ENCODE measurements at regions of chr5 and their contacts with region 1.

Region 1: DNA sequence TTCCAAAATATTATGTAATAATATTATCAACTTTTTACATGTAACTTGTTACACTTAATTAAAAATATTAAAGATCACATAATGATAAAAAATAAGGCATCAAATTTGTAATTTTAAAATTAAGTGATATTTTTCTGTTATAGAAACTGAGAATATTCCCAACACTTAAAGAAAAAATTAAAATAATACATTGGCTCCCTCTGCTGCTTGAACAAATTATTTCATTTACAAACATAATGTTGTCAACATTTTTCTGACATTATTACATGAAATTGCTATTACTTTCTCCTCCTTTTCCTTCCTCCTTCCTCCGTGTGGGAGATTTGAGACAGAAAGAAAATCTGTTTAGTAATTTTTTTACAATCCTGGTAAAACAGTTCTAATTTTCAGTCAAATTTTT is 42.3 kb downstream of the RNF180 start:
- DNase-seq: no peak
- ATAC-seq: no peak
- H3K4me3 Mint-ChIP-seq: no peak overlapping the region
- H3K27ac Mint-ChIP-seq: no peak overlapping the region
- H3K4me1 Mint-ChIP-seq: no peaks in the 10 kb centered on the region
- H3K27me3 Mint-ChIP-seq: peaks cover 6% of the 10 kb centered on the region

Region 2: GRCh38 chr5:63401436-63402046 is 806.4 kb before region 1 on chr5:
- CTCF ChIA-PET with region 1: no interaction called
- POLR2A ChIA-PET with region 1: no interaction called
- intact Hi-C with region 1: loop called in 1 of 2 experiments (anchors 10 kb)
- DNase-seq: peak; percentile 66
- ATAC-seq: no peak
- H3K4me3 Mint-ChIP-seq: no peak overlapping the region
- H3K27ac Mint-ChIP-seq: no peak overlapping the region
- H3K4me1 Mint-ChIP-seq: no peaks in the 10 kb centered on the region
- H3K27me3 Mint-ChIP-seq: no peaks in the 10 kb centered on the region

Region 3: DNA sequence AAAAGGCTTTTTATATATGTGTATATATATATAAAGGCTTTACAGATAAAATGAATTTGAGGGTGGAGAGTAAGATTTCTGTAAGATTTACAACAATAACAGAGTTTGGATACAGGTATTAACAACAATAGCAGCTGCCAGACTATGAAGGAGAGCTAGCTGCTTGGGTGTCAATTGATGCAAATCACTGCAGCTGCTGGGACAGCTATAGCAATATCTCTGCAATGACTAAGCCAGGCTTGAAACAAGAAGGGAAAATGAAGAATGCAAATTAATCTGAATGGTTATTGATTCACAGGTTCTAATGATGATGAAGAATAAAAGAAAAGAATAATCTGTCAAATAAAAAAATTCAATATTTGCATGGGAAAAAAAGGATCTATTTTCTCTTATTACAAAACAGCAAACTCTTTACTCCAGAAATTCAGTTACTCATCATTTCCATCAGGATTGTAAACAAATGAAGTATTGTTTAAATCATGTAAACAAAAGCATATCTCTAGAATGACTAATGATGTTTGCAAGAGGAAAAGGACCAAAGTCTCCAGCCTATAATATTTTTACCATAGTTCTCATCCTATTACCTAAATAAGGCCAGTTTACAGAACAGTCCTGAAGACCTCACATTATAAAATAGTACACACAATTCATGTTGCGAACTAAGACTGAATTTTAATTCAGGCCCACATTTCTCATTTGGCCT is 464.7 kb before region 1 on chr5:
- CTCF ChIA-PET with region 1: no interaction called
- POLR2A ChIA-PET with region 1: no interaction called
- intact Hi-C with region 1: no loop called
- DNase-seq: no peak
- ATAC-seq: no peak
- H3K4me3 Mint-ChIP-seq: no peak overlapping the region
- H3K27ac Mint-ChIP-seq: no peak overlapping the region
- H3K4me1 Mint-ChIP-seq: no peaks in the 10 kb centered on the region
- H3K27me3 Mint-ChIP-seq: no peaks in the 10 kb centered on the region

Region 4: DNA sequence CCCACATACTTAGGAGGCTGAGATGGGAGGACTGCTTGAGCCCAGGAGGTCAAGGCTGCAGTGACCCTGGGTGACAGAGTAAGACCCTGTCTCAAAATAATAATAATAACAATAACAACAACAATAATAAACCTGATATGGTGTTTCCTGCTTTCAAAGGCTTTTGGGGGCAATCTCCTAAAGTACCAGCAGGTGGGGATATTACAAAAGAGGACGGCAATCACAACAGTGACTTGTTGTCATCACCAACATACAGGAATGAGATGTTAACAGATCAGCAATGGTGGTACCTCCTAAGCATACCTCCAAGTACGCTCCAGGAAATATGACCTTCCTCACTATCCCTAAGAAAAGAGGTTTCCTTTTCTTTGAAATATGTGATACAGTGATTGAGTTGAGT is 133.4 kb before region 1 on chr5:
- CTCF ChIA-PET with region 1: no interaction called
- POLR2A ChIA-PET with region 1: no interaction called
- intact Hi-C with region 1: loop called in 1 of 2 experiments (anchors 5 kb)
- DNase-seq: no peak
- ATAC-seq: no peak
- H3K4me3 Mint-ChIP-seq: no peak overlapping the region
- H3K27ac Mint-ChIP-seq: no peak overlapping the region
- H3K4me1 Mint-ChIP-seq: no peaks in the 10 kb centered on the region
- H3K27me3 Mint-ChIP-seq: no peaks in the 10 kb centered on the region

Measured in activated CD4-positive, alpha-beta T cell treated with anti-CD3 and anti-CD28 coated beads for 36 hours (primary cell).